ENCODE measurements at regions of chr4 and their contacts with region 1.

Region 1: GRCh38 chr4:101367201-101367600 is 19.9 kb upstream of the PPP3CA start:
- DNase-seq: peak in 1 of 2 experiments; percentile 21
- H3K4me3 ChIP-seq: no peak overlapping the region
- H3K4me3 Mint-ChIP-seq: no peak overlapping the region
- H3K27ac Mint-ChIP-seq: peak overlapping the region; percentile 25
- H3K4me1 ChIP-seq: peaks cover 13% of the 10 kb centered on the region
- H3K4me1 Mint-ChIP-seq: peaks cover 14% of the 10 kb centered on the region
- H3K27me3 ChIP-seq: no peaks in the 10 kb centered on the region
- H3K27me3 Mint-ChIP-seq: no peaks in the 10 kb centered on the region
- CTCF ChIP-seq: no peak

Region 2: DNA sequence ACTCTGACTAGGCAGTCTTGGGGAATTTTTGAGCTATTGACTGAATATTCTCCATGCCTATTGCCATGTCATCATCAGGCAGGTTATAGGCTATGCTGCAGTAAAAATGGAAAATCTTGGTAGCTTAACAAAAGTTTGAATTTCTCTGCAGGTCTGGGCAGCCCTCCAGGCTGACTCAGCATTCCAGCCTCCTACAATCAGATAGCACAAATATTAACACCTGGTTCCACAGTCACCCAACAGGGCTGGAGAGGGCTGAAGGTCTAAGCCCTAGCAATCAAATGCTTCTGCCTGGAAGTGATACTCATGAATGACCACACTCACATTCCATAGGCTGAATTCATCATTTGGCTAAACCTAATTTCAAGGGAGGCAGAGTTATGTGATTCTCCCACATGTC is 10.3 kb before region 1 on chr4:
- CTCF ChIA-PET with region 1: no interaction called
- POLR2A ChIA-PET with region 1: no interaction called
- intact Hi-C with region 1: loop called (anchors 1 kb)
- DNase-seq: peak; percentile 67 to 84
- H3K4me3 ChIP-seq: no peak overlapping the region
- H3K4me3 Mint-ChIP-seq: peak overlapping the region; percentile 59
- H3K27ac Mint-ChIP-seq: peak overlapping the region; percentile 92
- H3K4me1 ChIP-seq: peaks cover 43% of the 10 kb centered on the region
- H3K4me1 Mint-ChIP-seq: peaks cover 31% of the 10 kb centered on the region
- H3K27me3 ChIP-seq: no peaks in the 10 kb centered on the region
- H3K27me3 Mint-ChIP-seq: no peaks in the 10 kb centered on the region
- CTCF ChIP-seq: no peak

Region 3: DNA sequence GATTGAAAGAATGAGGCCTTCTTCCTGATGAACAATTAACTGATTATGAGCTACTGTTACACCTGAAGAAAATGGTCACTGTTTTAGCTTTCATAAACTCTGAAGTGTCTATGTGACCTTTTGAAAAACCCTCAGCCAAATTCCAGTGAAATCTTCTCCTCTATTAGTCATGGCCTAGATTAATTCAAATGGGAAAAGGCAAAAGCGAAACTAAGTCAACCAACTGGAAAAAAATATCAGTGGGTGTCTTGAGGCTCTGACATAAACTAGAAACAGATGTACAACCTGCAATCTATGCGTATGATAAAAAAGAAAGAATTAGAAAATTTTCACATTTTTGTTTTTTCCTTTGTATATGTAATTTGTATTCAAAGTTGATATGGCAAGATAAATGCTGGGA is 253.9 kb after region 1 on chr4:
- CTCF ChIA-PET with region 1: no interaction called
- POLR2A ChIA-PET with region 1: no interaction called
- intact Hi-C with region 1: no loop called
- DNase-seq: no peak
- H3K4me3 ChIP-seq: no peak overlapping the region
- H3K4me3 Mint-ChIP-seq: no peak overlapping the region
- H3K27ac Mint-ChIP-seq: no peak overlapping the region
- H3K4me1 ChIP-seq: no peaks in the 10 kb centered on the region
- H3K4me1 Mint-ChIP-seq: no peaks in the 10 kb centered on the region
- H3K27me3 ChIP-seq: no peaks in the 10 kb centered on the region
- H3K27me3 Mint-ChIP-seq: peaks cover 9% of the 10 kb centered on the region
- CTCF ChIP-seq: no peak

Region 4: GRCh38 chr4:102308031-102308799 is 941.0 kb after region 1 on chr4:
- CTCF ChIA-PET with region 1: no interaction called
- POLR2A ChIA-PET with region 1: no interaction called
- intact Hi-C with region 1: no loop called
- DNase-seq: no peak
- H3K4me3 ChIP-seq: no peak overlapping the region
- H3K4me3 Mint-ChIP-seq: no peak overlapping the region
- H3K27ac Mint-ChIP-seq: no peak overlapping the region
- H3K4me1 ChIP-seq: no peaks in the 10 kb centered on the region
- H3K4me1 Mint-ChIP-seq: no peaks in the 10 kb centered on the region
- H3K27me3 ChIP-seq: no peaks in the 10 kb centered on the region
- H3K27me3 Mint-ChIP-seq: no peaks in the 10 kb centered on the region
- CTCF ChIP-seq: no peak

Measured in Caco-2 (cell line).